Mucosa of descending colon (tissue), 3 donors: ENCODE measurements at regions of chr14 and their contacts with region 1.

Region 1: DNA sequence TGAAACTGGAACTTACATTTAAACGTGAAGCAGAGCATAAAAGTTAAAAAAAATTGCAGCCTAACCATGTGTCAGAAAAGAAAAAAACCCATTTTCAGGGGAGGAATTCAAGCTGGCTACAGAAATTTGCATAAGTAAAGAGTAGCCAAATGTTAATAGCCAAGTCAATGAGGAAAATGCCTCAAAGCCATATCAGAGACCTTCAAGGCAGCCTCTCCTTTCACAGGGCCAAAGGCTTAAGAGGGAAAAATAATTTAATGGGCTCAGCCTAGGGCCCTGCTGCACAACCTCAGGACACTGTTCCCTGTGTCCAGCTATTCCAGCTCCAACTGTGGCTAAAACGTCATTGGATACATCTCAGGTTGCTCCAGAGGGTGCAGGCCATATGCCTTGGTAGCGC is 749.5 kb downstream of the FLRT2 start:
- DNase-seq: no peak
- ATAC-seq: no peak
- H3K4me3 ChIP-seq: no peak overlapping the region
- H3K4me1 ChIP-seq: no peaks in the 10 kb centered on the region
- CTCF ChIP-seq: no peak

Region 2: DNA sequence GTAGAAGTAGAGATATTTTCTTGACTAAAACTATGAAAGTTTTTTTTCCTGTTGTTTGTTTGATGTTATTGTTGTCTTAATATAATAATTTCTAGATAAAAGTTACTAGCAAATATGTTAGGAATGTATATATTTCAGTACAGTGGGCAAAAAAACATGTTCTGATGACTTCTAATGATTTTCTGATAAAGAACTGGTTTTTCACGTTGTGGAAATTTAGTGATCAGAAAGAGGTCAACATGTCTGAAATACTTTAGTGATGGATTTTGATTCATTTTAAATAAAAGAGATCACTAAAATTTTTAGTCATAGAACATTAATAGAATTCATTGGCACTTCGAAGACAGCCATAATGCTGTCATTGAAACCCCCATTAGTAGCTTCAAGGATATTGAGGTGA is 30.5 kb before region 1 on chr14:
- intact Hi-C with region 1: loop called in 1 of 2 experiments (anchors 2 kb)
- DNase-seq: no peak
- ATAC-seq: no peak
- H3K4me3 ChIP-seq: no peak overlapping the region
- H3K4me1 ChIP-seq: no peaks in the 10 kb centered on the region
- CTCF ChIP-seq: no peak

Region 3: GRCh38 chr14:86450085-86450484 is 170.7 kb after region 1 on chr14:
- intact Hi-C with region 1: no loop called
- DNase-seq: no peak
- ATAC-seq: no peak
- H3K4me3 ChIP-seq: no peak overlapping the region
- H3K4me1 ChIP-seq: no peaks in the 10 kb centered on the region
- CTCF ChIP-seq: no peak

Region 4: DNA sequence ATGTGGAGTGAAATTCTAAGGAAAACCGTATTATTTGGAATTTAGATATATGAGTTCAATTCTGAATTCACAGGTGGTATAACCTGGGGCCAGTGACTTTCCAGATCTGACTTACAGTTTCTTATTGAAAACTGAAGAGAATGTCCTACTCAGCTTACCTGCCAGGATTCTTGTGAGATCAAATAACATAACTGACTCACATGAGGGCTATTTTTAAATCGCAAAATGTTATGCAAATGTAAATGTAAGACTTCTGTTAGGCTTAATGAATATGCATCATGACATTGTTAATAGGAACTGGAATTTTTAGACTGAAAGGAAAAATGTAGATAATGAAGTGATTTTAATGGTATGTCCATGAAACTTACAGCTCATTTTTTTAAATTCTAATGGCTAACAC is 392.7 kb after region 1 on chr14:
- intact Hi-C with region 1: no loop called
- DNase-seq: no peak
- ATAC-seq: no peak
- H3K4me3 ChIP-seq: no peak overlapping the region
- H3K4me1 ChIP-seq: no peaks in the 10 kb centered on the region
- CTCF ChIP-seq: no peak